Mammary epithelial cell (primary cell): ENCODE measurements at regions of chr11 and their contacts with region 1.

Region 1: DNA sequence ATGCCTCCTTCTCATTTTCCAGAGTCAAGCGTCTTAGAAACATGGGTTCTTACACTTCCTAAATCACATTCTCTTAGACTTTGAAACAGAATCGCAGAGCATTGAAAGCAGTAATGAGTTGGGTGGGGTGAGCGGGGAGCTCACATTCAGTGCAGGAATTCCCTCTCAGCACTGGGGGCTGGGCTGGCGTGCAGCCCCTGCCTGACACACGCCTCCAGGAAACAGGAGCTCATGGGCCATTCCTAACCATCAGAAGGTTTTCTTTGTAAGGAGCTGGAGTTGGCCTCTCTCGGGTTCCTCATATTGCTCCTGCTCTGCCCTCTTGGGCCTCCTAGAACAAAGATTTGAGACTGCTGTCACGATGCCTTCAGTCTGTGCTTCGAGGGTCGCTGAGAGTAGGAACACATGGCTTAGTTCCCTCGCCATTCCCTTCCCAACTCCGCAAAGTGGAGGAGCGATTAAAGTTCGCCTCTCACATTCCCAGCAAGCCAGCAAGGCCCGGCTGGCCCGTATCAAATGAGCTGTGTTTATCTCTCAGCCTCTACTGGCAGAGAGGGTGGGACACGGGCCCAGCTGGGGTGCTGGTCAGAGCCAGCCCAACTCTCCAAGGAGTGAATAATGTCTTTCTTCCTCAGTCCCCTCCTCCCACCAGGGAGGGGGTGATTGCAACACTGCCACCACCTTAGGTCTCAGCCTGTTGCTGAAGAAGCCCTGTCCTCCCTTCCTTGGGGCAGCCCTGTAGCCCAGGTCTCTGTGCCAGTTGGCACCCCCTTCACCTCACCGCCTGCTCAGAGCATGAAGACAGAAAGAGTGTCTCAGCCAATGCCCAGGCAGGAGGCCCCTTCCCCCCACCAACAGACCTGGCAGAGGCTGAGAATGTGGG is 10.4 kb downstream of the CHRDL2 start:
- DNase-seq: no peak
- H3K4me3 ChIP-seq: no peak overlapping the region
- H3K27ac ChIP-seq: no peak overlapping the region
- H3K4me1 ChIP-seq: no peaks in the 10 kb centered on the region
- H3K27me3 ChIP-seq: no peaks in the 10 kb centered on the region
- CTCF ChIP-seq: no peak

Region 2: GRCh38 chr11:74602637-74603556 is 117.9 kb before region 1 on chr11:
- CTCF ChIA-PET with region 1: no interaction called
- dilution Hi-C with region 1: loop called (anchors 5 kb)
- in situ Hi-C with region 1: no loop called
- intact Hi-C with region 1: no loop called
- DNase-seq: no peak
- H3K4me3 ChIP-seq: no peak overlapping the region
- H3K27ac ChIP-seq: no peak overlapping the region
- H3K4me1 ChIP-seq: no peaks in the 10 kb centered on the region
- H3K27me3 ChIP-seq: no peaks in the 10 kb centered on the region
- CTCF ChIP-seq: no peak

Region 3: DNA sequence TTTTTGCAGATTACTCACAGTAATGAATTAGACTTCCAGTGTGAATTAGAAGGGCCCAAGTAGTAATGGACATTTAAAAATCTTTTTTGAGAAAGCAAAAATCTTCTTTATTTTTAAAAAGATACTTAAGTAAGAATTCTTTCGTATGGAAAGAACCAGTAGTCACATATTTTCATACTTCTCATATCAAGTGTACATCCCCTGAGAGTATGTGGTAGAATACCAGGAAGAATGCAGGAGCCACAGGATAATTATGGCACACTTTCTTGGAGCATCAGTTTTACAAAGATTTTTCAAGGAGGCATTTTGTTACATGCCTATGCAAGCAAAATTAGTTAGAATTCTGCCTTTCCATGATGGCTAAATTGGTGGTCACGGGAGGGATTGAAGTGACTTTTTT is 100.3 kb before region 1 on chr11:
- CTCF ChIA-PET with region 1: no interaction called
- dilution Hi-C with region 1: no loop called
- in situ Hi-C with region 1: no loop called
- intact Hi-C with region 1: no loop called
- DNase-seq: no peak
- H3K4me3 ChIP-seq: no peak overlapping the region
- H3K27ac ChIP-seq: no peak overlapping the region
- H3K4me1 ChIP-seq: no peaks in the 10 kb centered on the region
- H3K27me3 ChIP-seq: no peaks in the 10 kb centered on the region
- CTCF ChIP-seq: no peak

Region 4: DNA sequence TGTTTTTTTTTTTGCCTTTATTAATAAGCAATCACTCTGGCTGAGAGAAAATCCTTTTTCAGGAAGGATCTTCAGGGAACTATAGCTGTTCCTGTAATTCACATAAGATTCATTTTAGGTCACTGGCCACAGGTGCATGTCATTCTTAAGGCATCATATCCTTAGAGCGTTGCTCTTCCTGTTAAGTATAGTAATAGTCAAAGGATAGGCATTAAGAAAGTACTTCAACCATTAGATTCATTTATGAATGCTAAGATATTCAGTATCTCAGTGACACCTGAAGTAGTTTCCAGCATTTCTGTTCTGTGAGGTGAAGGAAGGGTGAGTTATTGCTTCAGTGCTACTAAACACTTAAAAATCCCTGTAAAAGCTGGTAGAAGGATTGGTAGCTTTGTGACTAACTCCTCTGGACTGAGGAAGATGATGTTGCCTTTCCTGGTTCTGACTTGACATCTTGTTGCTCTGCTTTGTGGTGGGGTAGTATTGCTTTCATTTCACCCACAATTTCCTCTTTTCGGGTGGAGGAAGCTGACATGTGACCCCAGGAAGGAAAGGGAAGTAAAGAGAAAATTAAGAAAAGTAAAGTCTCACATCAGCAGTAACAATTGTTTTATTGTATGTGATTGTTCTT is 62.5 kb after region 1 on chr11:
- CTCF ChIA-PET with region 1: no interaction called
- dilution Hi-C with region 1: loop called (anchors 5 kb)
- in situ Hi-C with region 1: no loop called
- intact Hi-C with region 1: no loop called
- DNase-seq: peak; percentile 73
- H3K4me3 ChIP-seq: no peak overlapping the region
- H3K27ac ChIP-seq: peak overlapping the region; percentile 42
- H3K4me1 ChIP-seq: peaks cover 18% of the 10 kb centered on the region
- H3K27me3 ChIP-seq: no peaks in the 10 kb centered on the region
- CTCF ChIP-seq: no peak

Region 5: DNA sequence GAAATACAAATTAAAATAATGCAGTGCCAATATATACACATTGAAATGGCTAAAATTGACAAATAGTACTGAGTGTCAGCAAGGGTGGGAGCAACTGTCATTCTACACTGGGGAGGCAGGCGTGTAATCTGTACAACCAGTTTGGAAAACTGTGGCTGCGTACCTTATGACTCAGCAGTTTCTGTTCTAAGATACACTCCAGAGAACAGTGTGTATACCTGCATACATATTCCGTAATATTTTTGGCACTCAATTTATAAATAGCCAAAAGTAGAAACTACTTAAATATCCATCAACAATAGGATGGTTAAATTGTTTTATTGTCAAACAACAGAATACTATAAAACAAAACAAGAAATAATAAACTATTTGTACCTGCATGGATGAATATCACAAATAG is 85.4 kb after region 1 on chr11:
- CTCF ChIA-PET with region 1: no interaction called
- dilution Hi-C with region 1: no loop called
- in situ Hi-C with region 1: no loop called
- intact Hi-C with region 1: no loop called
- DNase-seq: peak; percentile 19
- H3K4me3 ChIP-seq: no peak overlapping the region
- H3K27ac ChIP-seq: no peak overlapping the region
- H3K4me1 ChIP-seq: no peaks in the 10 kb centered on the region
- H3K27me3 ChIP-seq: no peaks in the 10 kb centered on the region
- CTCF ChIP-seq: no peak